ENCODE measurements at regions of chr3 and their contacts with region 1.

Region 1: DNA sequence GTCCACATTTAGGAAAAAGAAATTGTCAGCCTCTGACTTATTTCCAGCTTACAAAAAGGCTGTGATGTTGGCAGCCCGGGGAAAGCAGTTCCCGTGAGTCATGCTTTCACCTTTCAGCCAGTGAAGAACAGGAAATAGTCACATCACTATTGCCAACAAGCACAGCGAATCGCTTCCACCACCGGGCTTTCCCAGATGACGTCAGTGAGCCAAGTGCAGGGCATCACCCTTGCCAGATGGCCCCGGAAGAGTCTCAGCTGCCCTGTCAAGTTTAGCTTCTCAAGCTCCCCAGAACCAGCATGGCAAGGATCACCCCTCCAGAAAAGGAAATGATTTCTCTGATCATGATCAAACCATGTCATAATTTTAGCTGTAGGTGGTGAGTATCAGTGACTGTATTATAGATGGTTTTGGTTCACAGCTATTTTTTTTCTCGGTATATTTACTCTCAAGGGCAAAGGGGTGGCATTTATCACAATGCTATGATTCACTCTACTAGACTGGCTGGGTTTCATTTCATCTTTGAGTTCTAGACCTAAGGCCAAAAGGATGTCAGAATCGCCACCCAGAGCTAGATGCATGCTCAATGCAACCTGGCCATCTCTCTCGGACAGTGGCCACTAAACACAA is 32.9 kb downstream of the B3GNT5 start:
- DNase-seq: peak; percentile 96
- H3K4me3 Mint-ChIP-seq: peak overlapping the region; percentile 82
- H3K27ac Mint-ChIP-seq: peak overlapping the region; percentile 97
- H3K4me1 Mint-ChIP-seq: peaks cover 32% of the 10 kb centered on the region
- H3K27me3 Mint-ChIP-seq: no peaks in the 10 kb centered on the region

Region 2: GRCh38 chr3:182879031-182879611 is 406.8 kb before region 1 on chr3:
- intact Hi-C with region 1: no loop called
- DNase-seq: no peak
- H3K4me3 Mint-ChIP-seq: no peak overlapping the region
- H3K27ac Mint-ChIP-seq: no peak overlapping the region
- H3K4me1 Mint-ChIP-seq: no peaks in the 10 kb centered on the region
- H3K27me3 Mint-ChIP-seq: no peaks in the 10 kb centered on the region

Region 3: DNA sequence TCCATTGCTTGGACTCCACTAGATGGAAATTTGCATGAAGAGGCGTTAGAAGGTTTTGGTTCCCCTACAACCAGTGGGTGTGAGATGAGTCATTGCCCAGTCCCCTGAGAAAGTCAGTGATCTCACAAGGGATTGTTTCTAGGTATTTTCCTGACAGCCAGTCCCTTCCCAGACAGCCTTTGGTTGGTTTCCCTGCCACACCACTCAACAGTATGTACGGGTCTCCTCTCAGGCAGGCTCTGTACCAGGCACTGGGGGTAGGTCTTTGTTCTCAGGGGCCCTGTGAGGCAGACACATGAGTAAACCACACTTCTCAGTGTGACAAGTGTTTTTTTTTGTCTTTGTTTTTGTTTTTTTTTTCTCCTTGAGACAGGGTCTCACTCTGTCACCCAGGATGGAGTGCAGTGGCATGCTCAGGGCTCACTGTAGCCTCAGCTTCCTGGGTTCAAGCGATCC is 127.4 kb before region 1 on chr3:
- intact Hi-C with region 1: loop called (anchors 2 kb)
- DNase-seq: peak; percentile 71
- H3K4me3 Mint-ChIP-seq: peak overlapping the region; percentile 44
- H3K27ac Mint-ChIP-seq: peak overlapping the region; percentile 81
- H3K4me1 Mint-ChIP-seq: peaks cover 39% of the 10 kb centered on the region
- H3K27me3 Mint-ChIP-seq: no peaks in the 10 kb centered on the region

Region 4: DNA sequence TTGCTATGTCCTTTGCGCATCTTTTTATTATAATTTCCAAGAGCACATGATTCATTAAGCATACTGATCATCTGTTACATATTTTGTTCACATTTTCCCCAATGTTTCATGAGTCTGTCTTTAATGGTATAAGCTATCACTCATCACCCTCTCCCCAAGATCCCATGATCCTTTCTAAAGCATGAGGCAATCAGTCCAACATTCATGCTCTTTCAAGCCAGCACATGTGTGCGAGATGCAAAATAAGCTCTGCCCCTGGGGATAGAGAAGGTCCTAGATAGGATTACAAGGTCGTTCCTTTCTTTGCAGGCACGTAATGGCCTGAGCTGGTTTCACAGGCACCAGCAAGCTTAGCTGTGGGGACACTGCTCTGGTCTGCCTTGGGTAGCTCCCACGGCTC is 65.1 kb before region 1 on chr3:
- intact Hi-C with region 1: no loop called
- DNase-seq: no peak
- H3K4me3 Mint-ChIP-seq: no peak overlapping the region
- H3K27ac Mint-ChIP-seq: no peak overlapping the region
- H3K4me1 Mint-ChIP-seq: peaks cover 26% of the 10 kb centered on the region
- H3K27me3 Mint-ChIP-seq: no peaks in the 10 kb centered on the region

Region 5: DNA sequence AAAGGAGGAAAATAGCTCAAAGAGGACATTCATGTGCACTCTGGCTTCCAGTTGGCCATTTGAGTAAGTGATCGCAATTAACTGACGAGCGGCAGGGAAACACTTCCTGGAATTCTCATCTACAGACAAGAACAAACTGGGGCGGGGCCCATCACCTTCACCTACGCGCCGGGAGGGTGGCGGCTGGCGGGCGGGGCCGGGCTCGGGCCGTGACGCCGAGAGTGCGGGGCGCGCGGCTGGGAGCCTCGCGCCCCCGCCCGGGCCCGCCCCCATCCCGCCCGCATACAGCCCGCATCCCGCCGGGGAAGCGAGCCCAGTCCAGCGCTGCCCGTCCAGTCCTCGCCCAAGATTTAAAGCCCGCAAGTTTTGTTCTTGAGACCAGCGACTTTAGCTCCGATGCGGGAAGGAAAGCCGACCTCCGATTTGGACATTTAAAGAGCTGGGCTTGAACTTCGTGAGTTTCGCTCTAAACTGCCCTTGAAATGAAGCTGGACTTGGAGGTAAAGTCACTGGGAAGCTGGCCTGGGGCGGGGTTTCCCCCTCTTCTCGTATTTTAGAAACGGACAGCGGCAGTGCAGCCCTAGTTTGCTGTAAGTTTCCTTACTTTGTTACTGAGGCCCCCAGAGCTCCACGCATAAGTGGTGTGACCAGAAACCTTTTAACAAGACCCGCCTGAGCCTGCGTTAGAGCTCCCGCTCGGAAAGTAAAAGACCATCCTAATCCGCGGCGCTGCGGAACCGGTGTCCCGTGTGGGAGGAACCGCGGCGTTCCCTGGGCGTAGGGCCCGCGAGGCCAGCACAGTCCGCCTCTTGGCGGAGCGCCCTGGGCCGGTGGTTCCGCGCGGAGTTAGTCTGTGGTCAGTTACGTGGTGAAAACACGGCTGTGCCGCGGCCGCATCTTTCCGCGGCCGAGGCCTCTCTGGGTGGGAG is 32.7 kb before region 1 on chr3 and contains the start of gene B3GNT5:
- intact Hi-C with region 1: loop called (anchors 1 kb)
- DNase-seq: peak; percentile 81
- H3K4me3 Mint-ChIP-seq: peak within 1 kb of the TSS; percentile 84
- H3K27ac Mint-ChIP-seq: peak within 1 kb of the TSS; percentile 72
- H3K4me1 Mint-ChIP-seq: peaks cover 16% of the 10 kb centered on the region
- H3K27me3 Mint-ChIP-seq: peaks cover 12% of the 10 kb centered on the region
- total RNA-seq, gene B3GNT5: 25.0 and 27.9 TPM in 2 replicates

Region 6: DNA sequence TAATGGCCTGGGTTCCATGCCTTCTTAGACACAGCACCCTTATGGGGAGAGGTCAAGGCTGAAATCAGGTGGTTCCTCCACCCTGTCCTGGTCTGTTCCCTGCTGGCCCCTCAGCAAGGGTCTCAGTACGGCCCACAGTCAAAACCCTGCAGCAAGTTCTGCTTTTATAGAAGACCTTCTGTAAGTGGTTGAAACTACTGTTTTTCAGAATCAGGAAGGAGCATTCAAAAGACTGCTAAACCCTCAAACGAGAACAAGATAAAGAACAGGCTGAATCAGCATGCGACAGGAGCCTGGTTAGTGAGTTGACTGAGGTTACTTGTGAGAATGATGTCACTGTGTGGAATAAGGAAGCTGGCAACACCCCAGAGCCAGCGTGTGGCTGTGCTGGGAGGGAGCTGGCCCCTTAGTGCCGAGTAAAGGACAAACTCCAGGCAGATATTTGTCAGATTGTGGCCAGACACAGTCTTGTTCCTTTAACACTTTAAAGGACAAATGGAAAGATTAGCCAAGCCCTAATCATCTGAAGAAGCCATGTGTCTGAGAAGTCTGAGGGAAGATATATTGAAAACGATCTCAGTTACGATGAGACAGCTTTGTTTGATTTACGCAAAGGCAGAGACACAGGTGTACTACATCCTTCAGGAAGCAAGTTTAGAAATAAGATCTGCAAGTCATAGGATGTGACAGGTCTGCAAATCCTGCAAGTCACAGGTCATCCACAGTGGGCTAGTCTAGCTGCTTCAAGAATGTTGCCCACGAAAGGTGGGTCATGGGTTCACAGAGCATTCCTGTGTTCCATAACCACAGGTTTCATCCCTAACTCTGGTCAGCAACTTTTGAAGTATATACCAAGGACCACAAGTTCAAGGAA is 21.1 kb after region 1 on chr3:
- intact Hi-C with region 1: loop called (anchors 1 kb)
- DNase-seq: peak; percentile 79
- H3K4me3 Mint-ChIP-seq: peak overlapping the region; percentile 20
- H3K27ac Mint-ChIP-seq: peak overlapping the region; percentile 65
- H3K4me1 Mint-ChIP-seq: peaks cover 28% of the 10 kb centered on the region
- H3K27me3 Mint-ChIP-seq: no peaks in the 10 kb centered on the region

Region 7: DNA sequence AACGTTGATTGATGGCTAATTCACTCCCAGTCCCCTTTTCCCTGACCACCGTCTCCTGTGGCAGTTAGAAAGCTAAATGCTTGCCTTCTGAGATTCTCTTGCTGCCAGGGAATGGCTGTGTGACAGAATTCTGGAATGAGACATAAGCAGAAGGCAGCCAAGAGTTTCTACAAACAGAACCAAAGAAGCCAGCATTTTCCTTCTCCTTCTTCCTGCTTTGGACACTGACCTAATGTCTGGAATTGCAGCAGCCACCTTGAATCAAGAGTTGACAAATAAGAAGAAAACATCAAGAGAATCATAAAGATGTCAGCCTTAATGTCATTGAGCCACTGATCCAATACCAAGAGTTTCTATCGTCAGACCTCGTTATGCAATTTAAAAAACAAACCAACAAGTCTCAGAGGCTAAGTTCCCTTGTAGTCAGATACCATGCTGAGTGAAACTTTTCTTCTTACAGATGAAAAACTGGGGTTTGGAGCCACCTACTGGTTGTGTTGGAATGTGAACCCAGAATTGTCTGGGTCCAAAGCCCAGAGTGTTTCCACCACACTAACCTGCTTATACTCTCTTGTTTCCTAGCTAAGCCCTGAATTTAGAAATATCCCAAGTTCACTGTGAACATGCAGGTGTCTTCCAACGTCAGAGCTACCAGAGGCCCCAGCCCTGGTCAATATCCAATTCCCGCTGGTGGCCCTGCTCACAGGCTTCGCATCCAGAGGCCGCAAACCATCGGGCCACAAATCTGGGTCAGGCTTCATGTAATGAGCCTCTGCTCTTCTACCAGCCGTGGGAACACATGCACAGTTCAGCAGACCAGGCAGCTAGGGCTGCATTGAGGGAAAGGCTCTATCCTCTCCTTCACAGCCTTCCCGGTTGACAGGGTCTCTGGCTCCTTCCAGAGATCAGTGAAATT is 100.0 kb after region 1 on chr3:
- intact Hi-C with region 1: loop called (anchors 5 kb)
- DNase-seq: peak; percentile 89
- H3K4me3 Mint-ChIP-seq: no peak overlapping the region
- H3K27ac Mint-ChIP-seq: no peak overlapping the region
- H3K4me1 Mint-ChIP-seq: peaks cover 16% of the 10 kb centered on the region
- H3K27me3 Mint-ChIP-seq: no peaks in the 10 kb centered on the region